ENCODE measurements at regions of chr10 and their contacts with region 1.

Region 1: GRCh38 chr10:29131952-29132820 is 156.7 kb upstream of the LYZL1 start:
- DNase-seq: no peak
- CTCF ChIP-seq: no peak

Region 2: GRCh38 chr10:28991326-28992270 is 140.6 kb before region 1 on chr10:
- CTCF ChIA-PET with region 1: no interaction called
- POLR2A ChIA-PET with region 1: no interaction called
- DNase-seq: peak; percentile 30
- CTCF ChIP-seq: peak; percentile 48

Region 3: DNA sequence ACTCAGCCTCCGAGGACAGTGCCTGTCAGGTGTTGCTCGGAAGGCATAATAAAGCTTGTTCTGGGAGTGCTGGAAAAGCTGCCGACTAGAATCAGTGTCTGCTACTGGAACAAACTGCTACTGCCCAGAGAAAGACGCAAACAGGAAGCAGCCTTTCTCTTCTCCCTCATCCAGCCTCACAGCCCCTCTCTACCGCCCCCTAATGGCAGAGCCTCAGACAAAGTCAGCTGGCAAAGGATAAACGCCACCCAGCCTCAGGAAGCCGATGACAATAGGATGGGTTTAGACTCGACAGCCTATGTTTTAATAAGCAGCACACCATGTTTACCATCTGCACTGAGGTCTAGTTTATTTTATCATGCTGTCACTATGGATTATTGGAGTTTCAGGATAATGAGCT is 12.8 kb before region 1 on chr10:
- CTCF ChIA-PET with region 1: interaction called, 17 read pairs
- POLR2A ChIA-PET with region 1: no interaction called
- DNase-seq: no peak
- CTCF ChIP-seq: no peak

Measured in GM10248 (cell line).